Heart left ventricle (tissue), 16 donors: ENCODE measurements at regions of chr9 and their contacts with region 1.

Region 1: GRCh38 chr9:135864447-135865049 is 42.8 kb downstream of the CAMSAP1 start:
- DNase-seq: peak; percentile 41 to 74 (median 53)
- ATAC-seq: peak in 3 of 4 donors; percentile 42 to 52 (median 50)
- H3K4me3 ChIP-seq: no peak overlapping the region
- H3K27ac ChIP-seq: no peak overlapping the region
- H3K4me1 ChIP-seq: peaks cover 0 to 10% (median 3%) of the 10 kb centered on the region in 12 donors
- H3K27me3 ChIP-seq: no peaks in the 10 kb centered on the region
- CTCF ChIP-seq: peak; percentile 77 to 90 (median 82)
- POLR2A ChIP-seq: no peak

Region 2: GRCh38 chr9:135602789-135603481 is 261.6 kb before region 1 on chr9:
- intact Hi-C with region 1: loop called in 1 of 10 experiments (anchors 10 kb)
- DNase-seq: peak in 3 of 5 donors; percentile 21 to 46 (median 25)
- ATAC-seq: peak; percentile 26 to 50 (median 26)
- H3K4me3 ChIP-seq: no peak overlapping the region
- H3K27ac ChIP-seq: no peak overlapping the region
- H3K4me1 ChIP-seq: no peaks in the 10 kb centered on the region
- H3K27me3 ChIP-seq: peaks cover 0 to 13% (median 2%) of the 10 kb centered on the region in 9 donors
- CTCF ChIP-seq: peak; percentile 61 to 87 (median 70)
- POLR2A ChIP-seq: no peak

Region 3: GRCh38 chr9:135907431-135908092 is 43.0 kb after region 1 on chr9 and contains the start of gene CAMSAP1:
- intact Hi-C with region 1: loop called in 7 of 10 experiments (anchors 2 to 5 kb)
- DNase-seq: peak; percentile 94 to 98 (median 95)
- ATAC-seq: peak; percentile 91 to 98 (median 98)
- H3K4me3 ChIP-seq: peak within 1 kb of the TSS; percentile 61 to 95 (median 79)
- H3K27ac ChIP-seq: peak within 1 kb of the TSS in 11 of 12 donors; percentile 76 to 94 (median 88)
- H3K4me1 ChIP-seq: peaks cover 0 to 55% (median 37%) of the 10 kb centered on the region in 12 donors
- H3K27me3 ChIP-seq: no peaks in the 10 kb centered on the region
- CTCF ChIP-seq: no peak
- POLR2A ChIP-seq: peak in 1 of 2 donors; percentile 83
- total RNA-seq, gene CAMSAP1: 15.6 to 38.3 (median 22.5) TPM

Region 4: DNA sequence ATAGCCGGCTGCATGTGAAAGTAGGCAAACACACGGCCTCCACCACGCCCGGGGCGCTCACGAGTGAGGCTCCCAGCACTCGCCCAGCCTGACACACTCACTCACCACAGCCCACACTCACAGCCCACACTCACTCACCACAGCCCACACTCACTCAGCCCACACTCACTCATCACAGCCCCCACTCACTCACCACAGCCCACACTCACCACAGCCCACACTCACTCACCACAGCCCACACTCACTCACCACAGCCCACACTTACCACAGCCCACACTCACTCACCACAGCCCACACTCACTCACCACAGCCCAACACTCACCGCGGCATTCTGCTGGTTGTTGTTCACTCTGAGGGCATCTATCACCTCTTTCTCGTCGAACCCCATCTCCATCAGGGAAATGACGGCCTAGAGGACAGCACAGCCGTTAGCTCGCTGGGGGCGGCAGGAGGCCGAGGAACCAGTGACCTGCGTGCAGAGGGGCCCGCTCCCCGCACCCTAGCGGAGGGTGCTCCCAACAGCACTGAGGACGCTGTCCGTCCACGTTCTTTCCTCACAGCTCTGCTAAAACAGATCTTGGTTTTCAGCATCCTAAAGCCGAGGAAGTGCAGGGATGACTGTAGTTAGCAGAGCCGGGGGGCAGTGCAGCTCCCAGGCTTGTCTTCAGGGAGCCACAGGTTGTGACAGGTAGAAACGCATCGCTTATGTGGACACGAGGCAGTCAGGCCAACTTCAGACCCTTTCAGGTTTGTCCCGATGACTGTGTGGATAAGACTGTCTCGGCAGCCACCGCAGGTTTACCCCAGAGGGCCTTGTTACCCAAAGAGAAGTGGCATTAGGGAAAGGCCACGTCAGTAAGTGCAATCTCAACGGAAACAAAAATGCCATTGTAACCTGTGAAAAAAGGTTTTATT is 75.1 kb after region 1 on chr9:
- intact Hi-C with region 1: loop called in 1 of 10 experiments (anchors 10 kb)
- DNase-seq: peak in 2 of 5 donors; percentile 6 to 13
- ATAC-seq: no peak
- H3K4me3 ChIP-seq: no peak overlapping the region
- H3K27ac ChIP-seq: no peak overlapping the region
- H3K4me1 ChIP-seq: peaks cover 0 to 20% (median 11%) of the 10 kb centered on the region in 12 donors
- H3K27me3 ChIP-seq: no peaks in the 10 kb centered on the region
- CTCF ChIP-seq: no peak
- POLR2A ChIP-seq: no peak